SK-MEL-5 (cell line): ENCODE measurements at regions of chr9 and their contacts with region 1.

Region 1: DNA sequence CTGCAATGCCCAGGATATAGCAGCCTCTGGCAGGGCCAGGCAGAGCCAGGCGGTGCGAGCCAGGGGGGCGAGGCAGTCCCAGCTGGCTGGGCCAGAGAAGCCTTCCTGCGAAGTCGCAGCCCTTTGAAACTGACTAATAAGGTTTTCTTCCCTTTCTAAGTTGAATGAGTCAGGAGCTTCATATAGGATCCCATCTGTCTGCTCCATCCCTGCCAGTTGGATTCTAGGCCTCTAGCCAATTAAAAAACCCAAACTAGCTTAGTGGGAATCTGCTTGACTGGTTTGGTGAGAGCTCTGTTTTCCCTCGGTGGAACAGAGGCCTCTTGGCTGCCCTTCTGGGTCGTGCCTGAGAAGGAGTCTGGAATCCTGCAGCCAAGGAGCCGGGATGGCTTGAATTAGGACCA is 70.1 kb upstream of the RAPGEF1 start:
- DNase-seq: no peak

Region 2: GRCh38 chr9:131954299-131954698 is 144.4 kb after region 1 on chr9:
- in situ Hi-C with region 1: loop called (anchors 25 kb)
- DNase-seq: peak; percentile 42

Region 3: GRCh38 chr9:132032238-132032950 is 222.5 kb after region 1 on chr9:
- in situ Hi-C with region 1: loop called (anchors 10 kb)
- DNase-seq: no peak